Activated CD4-positive, alpha-beta memory T cell treated with anti-CD3 and anti-CD28 coated beads for 36 hours (primary cell): ENCODE measurements at regions of chrX and their contacts with region 1.

Region 1: GRCh38 chrX:64894454-64895038 is 81.7 kb downstream of the ZC4H2 start:
- DNase-seq: peak; percentile 46
- H3K4me3 Mint-ChIP-seq: no peak overlapping the region
- H3K27ac Mint-ChIP-seq: no peak overlapping the region
- H3K4me1 Mint-ChIP-seq: no peaks in the 10 kb centered on the region
- H3K27me3 Mint-ChIP-seq: no peaks in the 10 kb centered on the region

Region 2: GRCh38 chrX:64631769-64632168 is 262.8 kb before region 1 on chrX:
- CTCF ChIA-PET with region 1: no interaction called
- POLR2A ChIA-PET with region 1: no interaction called
- intact Hi-C with region 1: no loop called
- DNase-seq: no peak
- H3K4me3 Mint-ChIP-seq: no peak overlapping the region
- H3K27ac Mint-ChIP-seq: no peak overlapping the region
- H3K4me1 Mint-ChIP-seq: no peaks in the 10 kb centered on the region
- H3K27me3 Mint-ChIP-seq: no peaks in the 10 kb centered on the region

Region 3: GRCh38 chrX:64642482-64642881 is 252.1 kb before region 1 on chrX:
- CTCF ChIA-PET with region 1: no interaction called
- POLR2A ChIA-PET with region 1: no interaction called
- intact Hi-C with region 1: loop called (anchors 10 kb)
- DNase-seq: peak; percentile 11
- H3K4me3 Mint-ChIP-seq: no peak overlapping the region
- H3K27ac Mint-ChIP-seq: no peak overlapping the region
- H3K4me1 Mint-ChIP-seq: no peaks in the 10 kb centered on the region
- H3K27me3 Mint-ChIP-seq: no peaks in the 10 kb centered on the region

Region 4: GRCh38 chrX:65528705-65529340 is 634.3 kb after region 1 on chrX:
- CTCF ChIA-PET with region 1: no interaction called
- POLR2A ChIA-PET with region 1: no interaction called
- intact Hi-C with region 1: loop called (anchors 5 kb)
- DNase-seq: peak; percentile 60
- H3K4me3 Mint-ChIP-seq: no peak overlapping the region
- H3K27ac Mint-ChIP-seq: no peak overlapping the region
- H3K4me1 Mint-ChIP-seq: peaks cover 18% of the 10 kb centered on the region
- H3K27me3 Mint-ChIP-seq: no peaks in the 10 kb centered on the region